Activated CD4-positive, alpha-beta T cell treated with anti-CD3 and anti-CD28 coated beads for 36 hours (primary cell): ENCODE measurements at regions of chr3 and their contacts with region 1.

Region 1: GRCh38 chr3:152183473-152183872 is 85.3 kb upstream of the MBNL1 start:
- DNase-seq: peak; percentile 72
- ATAC-seq: peak; percentile 87
- H3K4me3 Mint-ChIP-seq: peak overlapping the region; percentile 6
- H3K27ac Mint-ChIP-seq: peak overlapping the region; percentile 71
- H3K4me1 Mint-ChIP-seq: peaks cover 67% of the 10 kb centered on the region
- H3K27me3 Mint-ChIP-seq: no peaks in the 10 kb centered on the region

Region 2: GRCh38 chr3:152199102-152199840 is 15.8 kb after region 1 on chr3:
- CTCF ChIA-PET with region 1: interaction called, 17 read pairs
- POLR2A ChIA-PET with region 1: interaction called, 4 read pairs
- intact Hi-C with region 1: no loop called
- DNase-seq: no peak
- ATAC-seq: peak; percentile 24
- H3K4me3 Mint-ChIP-seq: peak overlapping the region; percentile 72
- H3K27ac Mint-ChIP-seq: peak overlapping the region; percentile 96
- H3K4me1 Mint-ChIP-seq: peaks cover 67% of the 10 kb centered on the region
- H3K27me3 Mint-ChIP-seq: no peaks in the 10 kb centered on the region

Region 3: GRCh38 chr3:152650177-152650576 is 466.7 kb after region 1 on chr3:
- CTCF ChIA-PET with region 1: no interaction called
- POLR2A ChIA-PET with region 1: no interaction called
- intact Hi-C with region 1: no loop called
- DNase-seq: no peak
- ATAC-seq: no peak
- H3K4me3 Mint-ChIP-seq: no peak overlapping the region
- H3K27ac Mint-ChIP-seq: no peak overlapping the region
- H3K4me1 Mint-ChIP-seq: no peaks in the 10 kb centered on the region
- H3K27me3 Mint-ChIP-seq: peaks cover 1% of the 10 kb centered on the region